Natural killer cell (primary cell): ENCODE measurements at regions of chr6 and their contacts with region 1.

Region 1: GRCh38 chr6:80004173-80005072 is at the start of gene TTK:
- DNase-seq: peak; percentile 92 to 96
- ATAC-seq: peak; percentile 97 to 100 (median 98)
- H3K4me3 ChIP-seq: peak within 1 kb of the TSS; percentile 78
- H3K4me3 Mint-ChIP-seq: peak within 1 kb of the TSS; percentile 95
- H3K27ac ChIP-seq: peak within 1 kb of the TSS; percentile 89
- H3K27ac Mint-ChIP-seq: peak within 1 kb of the TSS; percentile 93 to 99
- H3K4me1 ChIP-seq: peaks cover 15% of the 10 kb centered on the region
- H3K4me1 Mint-ChIP-seq: peaks cover 15 to 25% of the 10 kb centered on the region in 2 donors
- H3K27me3 ChIP-seq: no peaks in the 10 kb centered on the region
- H3K27me3 Mint-ChIP-seq: no peaks in the 10 kb centered on the region
- CTCF ChIP-seq: no peak
- total RNA-seq, gene TTK: 0.87 to 1.7 (median 1.2) TPM

Region 2: GRCh38 chr6:79078075-79079025 is 926.1 kb before region 1 on chr6 and contains the start of gene PHIP:
- intact Hi-C with region 1: loop called (anchors 10 kb)
- DNase-seq: peak; percentile 88 to 97
- ATAC-seq: peak; percentile 78 to 92 (median 82)
- H3K4me3 ChIP-seq: peak within 1 kb of the TSS; percentile 100
- H3K4me3 Mint-ChIP-seq: peak within 1 kb of the TSS; percentile 95
- H3K27ac ChIP-seq: peak within 1 kb of the TSS; percentile 99
- H3K27ac Mint-ChIP-seq: peak within 1 kb of the TSS; percentile 93 to 96
- H3K4me1 ChIP-seq: peaks cover 5% of the 10 kb centered on the region
- H3K4me1 Mint-ChIP-seq: peaks cover 31 to 36% of the 10 kb centered on the region in 2 donors
- H3K27me3 ChIP-seq: peaks cover 6% of the 10 kb centered on the region
- H3K27me3 Mint-ChIP-seq: peaks cover 0 to 11% of the 10 kb centered on the region in 2 donors
- CTCF ChIP-seq: no peak
- total RNA-seq, gene PHIP: 38.5 to 45.6 (median 42.5) TPM

Region 3: GRCh38 chr6:79233611-79234149 is 770.7 kb before region 1 on chr6:
- intact Hi-C with region 1: loop called (anchors 5 kb)
- DNase-seq: peak; percentile 64 to 76
- ATAC-seq: peak; percentile 61 to 77 (median 66)
- H3K4me3 ChIP-seq: peak overlapping the region; percentile 74
- H3K4me3 Mint-ChIP-seq: peak overlapping the region; percentile 94
- H3K27ac ChIP-seq: peak overlapping the region; percentile 56
- H3K27ac Mint-ChIP-seq: peak overlapping the region; percentile 88 to 95
- H3K4me1 ChIP-seq: peaks cover 3% of the 10 kb centered on the region
- H3K4me1 Mint-ChIP-seq: peaks cover 23 to 35% of the 10 kb centered on the region in 2 donors
- H3K27me3 ChIP-seq: no peaks in the 10 kb centered on the region
- H3K27me3 Mint-ChIP-seq: no peaks in the 10 kb centered on the region
- CTCF ChIP-seq: peak; percentile 23

Region 4: DNA sequence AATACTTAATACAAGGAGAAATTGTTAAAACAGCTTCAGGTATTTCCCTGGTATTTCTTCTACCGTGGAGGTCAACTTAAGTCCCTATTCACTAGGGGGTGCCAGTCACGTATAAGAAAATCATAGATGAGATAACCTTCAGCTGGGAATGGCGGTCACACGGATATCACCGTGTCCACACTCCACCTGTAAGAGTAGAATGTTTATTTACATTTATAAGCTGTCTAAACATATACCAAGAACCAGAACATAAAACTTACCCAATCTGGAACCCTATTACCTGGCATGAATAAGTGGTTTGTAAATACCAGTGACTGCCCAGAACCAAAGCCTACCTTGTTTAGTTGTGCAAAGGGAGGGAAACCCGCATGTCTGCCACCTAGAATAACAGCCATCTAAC is 55.2 kb before region 1 on chr6:
- intact Hi-C with region 1: loop called (anchors 2 kb)
- DNase-seq: peak in 1 of 2 donors; percentile 89
- ATAC-seq: peak; percentile 46 to 53 (median 52)
- H3K4me3 ChIP-seq: no peak overlapping the region
- H3K4me3 Mint-ChIP-seq: no peak overlapping the region
- H3K27ac ChIP-seq: no peak overlapping the region
- H3K27ac Mint-ChIP-seq: no peak overlapping the region
- H3K4me1 ChIP-seq: peaks cover 13% of the 10 kb centered on the region
- H3K4me1 Mint-ChIP-seq: peaks cover 17 to 21% of the 10 kb centered on the region in 2 donors
- H3K27me3 ChIP-seq: peaks cover 21% of the 10 kb centered on the region
- H3K27me3 Mint-ChIP-seq: peaks cover 25 to 36% of the 10 kb centered on the region in 2 donors
- CTCF ChIP-seq: peak; percentile 70

Region 5: DNA sequence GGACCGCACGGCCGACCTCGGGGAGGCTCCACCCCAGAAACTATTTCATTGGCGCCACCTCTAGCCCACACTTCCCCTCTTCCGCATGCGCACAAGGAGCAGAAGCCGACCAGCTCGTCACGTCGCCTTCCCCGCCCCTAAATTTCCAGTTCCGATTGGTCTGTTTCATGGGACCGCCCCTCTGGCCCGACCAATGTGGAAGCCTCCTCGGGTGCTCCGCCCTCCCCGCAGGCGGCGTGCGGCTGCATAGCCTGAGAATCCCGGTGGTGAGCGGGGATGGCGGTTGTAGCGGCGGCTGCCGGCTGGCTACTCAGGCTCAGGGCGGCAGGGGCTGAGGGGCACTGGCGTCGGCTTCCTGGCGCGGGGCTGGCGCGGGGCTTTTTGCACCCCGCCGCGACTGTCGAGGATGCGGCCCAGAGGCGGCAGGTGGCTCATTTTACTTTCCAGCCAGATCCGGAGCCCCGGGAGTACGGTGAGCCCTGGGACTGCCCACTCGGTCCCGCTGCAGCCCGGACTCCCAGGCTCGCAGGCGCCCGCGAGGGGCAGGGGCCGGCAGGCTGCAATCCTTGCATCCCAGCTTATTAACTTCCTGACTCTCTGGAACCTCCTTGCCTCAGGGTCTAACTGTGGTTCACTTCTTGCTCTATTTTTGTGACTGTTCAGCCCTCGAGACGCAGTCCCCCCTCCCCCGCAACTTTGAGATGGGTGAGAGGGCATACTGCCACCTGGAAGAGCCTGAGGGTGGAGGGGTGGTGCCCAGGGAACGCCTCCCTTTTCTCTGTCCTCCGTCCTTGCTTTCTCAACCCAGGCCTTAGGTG is 102.2 kb after region 1 on chr6 and contains the start of gene BCKDHB:
- intact Hi-C with region 1: loop called (anchors 1 kb)
- DNase-seq: peak; percentile 93 to 99
- ATAC-seq: peak; percentile 96 to 99 (median 97)
- H3K4me3 ChIP-seq: peak within 1 kb of the TSS; percentile 75
- H3K4me3 Mint-ChIP-seq: peak within 1 kb of the TSS; percentile 95
- H3K27ac ChIP-seq: peak within 1 kb of the TSS; percentile 63
- H3K27ac Mint-ChIP-seq: peak within 1 kb of the TSS; percentile 84 to 86
- H3K4me1 ChIP-seq: peaks cover 5% of the 10 kb centered on the region
- H3K4me1 Mint-ChIP-seq: peaks cover 16 to 21% of the 10 kb centered on the region in 2 donors
- H3K27me3 ChIP-seq: no peaks in the 10 kb centered on the region
- H3K27me3 Mint-ChIP-seq: peaks cover 18 to 21% of the 10 kb centered on the region in 2 donors
- CTCF ChIP-seq: no peak
- total RNA-seq, gene BCKDHB: 11.1 to 13.7 (median 12.8) TPM

Region 6: GRCh38 chr6:80771941-80772340 is 767.5 kb after region 1 on chr6:
- intact Hi-C with region 1: no loop called
- DNase-seq: no peak
- ATAC-seq: no peak
- H3K4me3 ChIP-seq: no peak overlapping the region
- H3K4me3 Mint-ChIP-seq: no peak overlapping the region
- H3K27ac ChIP-seq: no peak overlapping the region
- H3K27ac Mint-ChIP-seq: no peak overlapping the region
- H3K4me1 ChIP-seq: no peaks in the 10 kb centered on the region
- H3K4me1 Mint-ChIP-seq: no peaks in the 10 kb centered on the region
- H3K27me3 ChIP-seq: no peaks in the 10 kb centered on the region
- H3K27me3 Mint-ChIP-seq: no peaks in the 10 kb centered on the region
- CTCF ChIP-seq: no peak